ENCODE measurements at regions of chr15 and their contacts with region 1.

Region 1: GRCh38 chr15:74816808-74817674 is 4.4 kb downstream of the LMAN1L start:
- DNase-seq: peak; percentile 56
- ATAC-seq: peak; percentile 84
- H3K4me3 ChIP-seq: peak overlapping the region in 1 of 3 experiments; percentile 35; a peak in 1 of 6 replicates
- H3K27ac ChIP-seq: no peak overlapping the region
- H3K4me1 ChIP-seq: peaks cover 40% of the 10 kb centered on the region
- H3K27me3 ChIP-seq: peaks cover 1 to 8% of the 10 kb centered on the region in 2 experiments; a peak in 2 of 5 replicates
- CTCF ChIP-seq: peak; percentile 82
- EP300 ChIP-seq: no peak
- POLR2A ChIP-seq: no peak
- RAD21 ChIP-seq: peak; percentile 46; the same call in 1 of the 2 replicates

Region 2: DNA sequence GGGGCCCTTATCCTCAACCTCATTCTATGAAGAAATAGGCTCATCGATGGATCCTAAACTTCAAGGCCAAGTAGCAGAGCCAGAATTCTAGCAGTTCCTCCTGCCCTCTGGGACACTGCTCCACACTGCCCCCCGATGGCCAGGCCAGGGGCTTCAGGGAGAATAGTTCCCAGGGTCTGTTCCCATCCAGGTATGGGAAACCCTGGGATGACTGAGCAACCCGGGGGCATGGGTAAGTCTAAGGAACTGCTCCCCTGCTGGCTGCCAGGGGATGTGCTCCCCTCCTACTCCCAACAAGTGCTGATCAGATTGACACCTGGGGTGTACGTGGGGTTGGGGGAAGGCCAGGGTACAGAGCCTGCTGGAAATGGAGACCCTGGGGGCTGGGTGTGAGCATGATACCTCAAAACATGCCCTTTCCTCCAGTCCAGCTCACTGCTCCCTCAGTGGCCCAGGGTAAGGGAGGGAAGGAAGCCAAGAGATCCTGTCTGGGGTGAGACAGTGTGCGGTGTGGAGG is 18.3 kb after region 1 on chr15:
- CTCF ChIA-PET with region 1: no interaction called
- POLR2A ChIA-PET with region 1: no interaction called
- in situ Hi-C with region 1: no loop called
- intact Hi-C with region 1: no loop called
- DNase-seq: peak; percentile 70
- ATAC-seq: peak; percentile 86
- H3K4me3 ChIP-seq: no peak overlapping the region
- H3K27ac ChIP-seq: no peak overlapping the region
- H3K4me1 ChIP-seq: peaks cover 30% of the 10 kb centered on the region
- H3K27me3 ChIP-seq: peaks cover 0 to 11% of the 10 kb centered on the region in 2 experiments; a peak in 2 of 5 replicates
- CTCF ChIP-seq: peak; percentile 82
- EP300 ChIP-seq: no peak
- POLR2A ChIP-seq: no peak
- RAD21 ChIP-seq: peak; percentile 59

Region 3: GRCh38 chr15:74937596-74938296 is 120.7 kb after region 1 on chr15 and contains the start of gene COX5A:
- CTCF ChIA-PET with region 1: no interaction called
- POLR2A ChIA-PET with region 1: no interaction called
- in situ Hi-C with region 1: no loop called
- intact Hi-C with region 1: loop called (anchors 1 kb)
- DNase-seq: peak; percentile 85
- ATAC-seq: peak; percentile 97
- H3K4me3 ChIP-seq: peak within 1 kb of the TSS; percentile 70 to 86 (median 72)
- H3K27ac ChIP-seq: peak within 1 kb of the TSS; percentile 98
- H3K4me1 ChIP-seq: peaks cover 59% of the 10 kb centered on the region
- H3K27me3 ChIP-seq: peaks cover 0 to 3% of the 10 kb centered on the region in 2 experiments; a peak in 2 of 5 replicates
- CTCF ChIP-seq: peak; percentile 23; the same call in 1 of the 2 replicates
- EP300 ChIP-seq: no peak
- POLR2A ChIP-seq: peak; percentile 79 to 95
- RAD21 ChIP-seq: no peak; the same call in 1 of the 2 replicates
- total RNA-seq, gene COX5A: 217 and 218 TPM in 2 replicates

Measured in HepG2 (cell line).